Mucosa of descending colon (tissue), 3 donors: ENCODE measurements at regions of chr17 and their contacts with region 1.

Region 1: DNA sequence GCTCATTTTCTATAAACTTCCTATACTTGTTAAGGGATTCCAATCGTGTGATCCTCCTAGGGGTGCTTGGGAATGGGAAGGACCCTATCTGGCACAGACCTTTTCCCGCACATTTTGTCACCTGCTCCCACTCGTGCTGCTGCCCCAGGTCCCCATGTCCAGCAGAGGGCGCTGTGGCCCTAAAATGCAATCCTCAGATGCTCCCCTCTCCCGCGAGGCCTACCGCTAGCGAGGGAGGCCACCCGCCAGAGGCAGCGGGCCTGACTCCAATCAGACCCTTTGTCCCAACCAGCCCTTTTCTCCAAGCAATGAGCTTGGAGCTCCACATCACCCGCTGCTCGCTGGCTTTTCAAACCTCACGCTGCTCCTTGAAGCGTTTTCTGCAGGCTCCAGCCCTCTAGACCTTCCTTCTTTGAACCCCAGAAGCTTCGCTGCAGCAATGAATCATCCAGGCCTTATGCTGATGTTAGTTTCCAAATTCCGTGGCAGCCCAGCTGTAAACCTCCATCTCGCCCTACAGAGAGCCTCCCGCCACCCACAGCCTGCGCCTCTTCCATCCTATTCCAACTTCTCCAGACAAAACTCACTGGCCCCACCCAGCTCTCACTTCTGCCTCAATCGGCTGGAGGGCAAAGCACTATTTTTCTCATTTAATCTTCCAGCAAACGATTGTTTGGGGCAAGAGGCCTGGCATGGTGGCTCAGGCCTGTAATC is 23.6 kb upstream of the FZD2 start:
- DNase-seq: peak; percentile 82 to 91 (median 88)
- ATAC-seq: peak; percentile 92
- H3K4me3 ChIP-seq: no peak overlapping the region
- H3K4me1 ChIP-seq: peaks cover 4% of the 10 kb centered on the region
- CTCF ChIP-seq: peak; percentile 85

Region 2: DNA sequence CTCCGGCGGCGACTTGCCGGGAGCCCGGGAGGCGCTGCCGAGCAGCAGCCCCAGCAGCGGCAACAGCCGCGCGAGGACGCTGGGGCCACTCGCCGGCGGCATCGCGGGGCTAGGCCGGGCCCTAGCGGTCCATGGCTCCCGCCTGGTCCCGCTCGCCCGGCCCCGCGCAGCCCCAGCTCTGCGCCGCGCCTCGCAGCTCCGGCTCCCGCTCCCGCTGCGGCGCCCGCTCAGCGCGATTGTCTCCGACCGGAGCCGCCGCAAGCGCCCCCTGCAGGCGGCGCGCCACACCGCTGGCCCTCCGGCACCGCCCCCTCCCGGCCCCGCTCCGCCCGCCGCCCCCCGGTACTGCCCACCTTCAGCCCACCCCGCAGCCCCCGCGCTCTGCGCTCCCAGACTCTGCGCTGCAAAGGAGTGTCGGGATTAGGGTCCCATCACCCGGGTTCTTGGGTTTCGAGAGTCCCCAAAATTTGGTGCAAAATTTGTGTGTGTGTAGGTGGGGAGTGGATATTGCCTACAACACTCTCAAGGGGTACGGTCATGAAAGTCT is 170.0 kb before region 1 on chr17 and contains the start of gene FAM171A2:
- intact Hi-C with region 1: no loop called
- DNase-seq: peak in 2 of 3 donors; percentile 55 to 74
- ATAC-seq: peak; percentile 94
- H3K4me3 ChIP-seq: no peak within 1 kb of the TSS
- H3K4me1 ChIP-seq: peaks cover 7% of the 10 kb centered on the region
- CTCF ChIP-seq: peak; percentile 90
- total RNA-seq, gene FAM171A2: 0.12 to 1.3 (median 0.31) TPM

Region 3: GRCh38 chr17:44636562-44636961 is 102.9 kb after region 1 on chr17:
- intact Hi-C with region 1: loop called in 1 of 2 experiments (anchors 5 kb)
- DNase-seq: no peak
- ATAC-seq: no peak
- H3K4me3 ChIP-seq: no peak overlapping the region
- H3K4me1 ChIP-seq: no peaks in the 10 kb centered on the region
- CTCF ChIP-seq: no peak